H1 (cell line): ENCODE measurements at regions of chr20 and their contacts with region 1.

Region 1: GRCh38 chr20:45373353-45374100 is 4.6 kb downstream of the TP53TG5 start:
- DNase-seq: peak; percentile 70 to 96
- H3K4me3 ChIP-seq: peak overlapping the region; percentile 27 to 63 (median 45); a peak in 7 of 8 replicates
- H3K27ac ChIP-seq: no peak overlapping the region
- H3K4me1 ChIP-seq: peaks cover 0 to 16% (median 9%) of the 10 kb centered on the region in 4 experiments; a peak in 6 of 7 replicates
- H3K27me3 ChIP-seq: peaks cover 0 to 12% (median 9%) of the 10 kb centered on the region in 4 experiments; a peak in 3 of 7 replicates
- CTCF ChIP-seq: peak; percentile 88 to 96 (median 92)
- EP300 ChIP-seq: no peak
- POLR2A ChIP-seq: no peak
- RAD21 ChIP-seq: peak; percentile 77 to 85

Region 2: DNA sequence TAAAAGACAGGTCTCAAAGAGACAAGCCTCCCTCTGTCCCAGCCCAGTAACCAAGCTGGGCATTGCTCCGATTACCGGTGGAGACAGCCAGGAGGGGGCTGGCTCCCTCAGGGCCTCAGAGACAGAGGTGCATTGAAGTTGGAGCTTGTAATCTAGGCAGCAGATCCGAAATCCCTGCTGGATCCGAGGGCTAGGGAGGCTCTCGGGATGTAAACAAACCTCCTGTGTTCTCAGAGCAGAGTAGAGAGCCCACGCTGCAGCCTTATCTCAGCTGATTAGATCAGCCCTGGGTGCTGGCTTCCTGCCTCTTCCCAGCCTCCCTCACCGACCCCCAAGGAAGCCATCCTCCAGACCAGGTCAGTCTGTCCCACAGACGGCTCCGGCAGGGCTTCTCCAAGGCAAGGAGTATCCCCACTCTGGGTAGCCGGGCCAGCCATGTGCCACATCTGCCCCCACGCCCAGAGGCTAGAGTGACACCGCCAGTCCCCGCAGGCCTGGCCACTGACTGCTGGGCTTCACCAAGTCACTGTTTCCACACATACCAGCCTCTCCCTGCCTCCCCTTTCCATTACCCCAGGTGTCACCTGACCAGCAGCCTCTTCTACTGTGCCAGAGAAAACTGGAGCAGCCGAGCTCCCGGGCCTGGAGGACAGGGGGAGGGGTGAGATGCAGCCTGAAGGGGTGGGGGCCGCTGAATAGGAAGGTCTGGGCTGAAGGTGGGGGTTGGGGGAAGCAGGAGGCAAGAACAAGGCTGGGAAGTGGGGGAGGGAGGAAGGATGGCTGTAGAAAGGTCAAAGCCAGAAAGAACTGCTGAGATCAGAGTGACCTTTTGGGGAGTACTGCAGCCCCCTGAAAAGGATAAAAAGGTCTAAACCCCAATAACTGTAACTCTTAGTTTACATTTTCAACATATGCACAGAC is 31.3 kb before region 1 on chr20:
- CTCF ChIA-PET with region 1: interaction called, 24 read pairs
- POLR2A ChIA-PET with region 1: interaction called, 11 read pairs
- DNase-seq: peak in 1 of 2 experiments; percentile 63
- H3K4me3 ChIP-seq: peak overlapping the region; percentile 8 to 51 (median 36)
- H3K27ac ChIP-seq: peak overlapping the region; percentile 89
- H3K4me1 ChIP-seq: peaks cover 46 to 87% (median 62%) of the 10 kb centered on the region in 4 experiments
- H3K27me3 ChIP-seq: no peaks in the 10 kb centered on the region
- CTCF ChIP-seq: no peak
- EP300 ChIP-seq: no peak
- POLR2A ChIP-seq: peak in 1 of 2 experiments; percentile 55; a peak in 2 of 3 replicates
- RAD21 ChIP-seq: 0 out of 4 replicates have a peak, but pooled peaks of 1 of the 2 experiments have one; percentile 7

Region 3: GRCh38 chr20:45362804-45363610 is 10.5 kb before region 1 on chr20 and contains the start of gene SYS1:
- CTCF ChIA-PET with region 1: interaction called, 85 read pairs
- POLR2A ChIA-PET with region 1: interaction called, 10 read pairs
- DNase-seq: peak; percentile 97 to 99
- H3K4me3 ChIP-seq: peak within 1 kb of the TSS; percentile 54 to 98 (median 80)
- H3K27ac ChIP-seq: peak within 1 kb of the TSS; percentile 72
- H3K4me1 ChIP-seq: peaks cover 3 to 12% (median 6%) of the 10 kb centered on the region in 4 experiments; a peak in 6 of 7 replicates
- H3K27me3 ChIP-seq: no peaks in the 10 kb centered on the region
- CTCF ChIP-seq: peak; percentile 70 to 91 (median 83)
- EP300 ChIP-seq: peak in 1 of 2 experiments; percentile 52; a peak in 1 of 3 replicates
- POLR2A ChIP-seq: peak in 1 of 2 experiments; percentile 81; a peak in 2 of 3 replicates
- RAD21 ChIP-seq: peak; percentile 82 to 83
- total RNA-seq, gene SYS1: 18.2 and 19.6 TPM in 2 replicates

Region 4: GRCh38 chr20:45406259-45407066 is 32.9 kb after region 1 on chr20:
- CTCF ChIA-PET with region 1: interaction called, 127 read pairs
- POLR2A ChIA-PET with region 1: interaction called, 42 read pairs
- DNase-seq: peak in 1 of 2 experiments; percentile 78
- H3K4me3 ChIP-seq: peak overlapping the region; percentile 82 to 86 (median 84)
- H3K27ac ChIP-seq: 0 out of 2 replicates have a peak overlapping the region, but pooled peaks have one; percentile 29
- H3K4me1 ChIP-seq: peaks cover 0 to 8% (median 3%) of the 10 kb centered on the region in 4 experiments; a peak in 4 of 7 replicates
- H3K27me3 ChIP-seq: peaks cover 2 to 20% (median 10%) of the 10 kb centered on the region in 4 experiments; a peak in 6 of 7 replicates
- CTCF ChIP-seq: no peak
- EP300 ChIP-seq: no peak
- POLR2A ChIP-seq: peak; percentile 36 to 60; a peak in 2 of 3 replicates
- RAD21 ChIP-seq: no peak

Region 5: GRCh38 chr20:45450097-45450818 is 76.7 kb after region 1 on chr20:
- CTCF ChIA-PET with region 1: interaction called, 150 read pairs
- POLR2A ChIA-PET with region 1: interaction called, 3 read pairs
- DNase-seq: no peak
- H3K4me3 ChIP-seq: no peak overlapping the region
- H3K27ac ChIP-seq: no peak overlapping the region
- H3K4me1 ChIP-seq: no peaks in the 10 kb centered on the region; a peak in 1 of 7 replicates
- H3K27me3 ChIP-seq: no peaks in the 10 kb centered on the region
- CTCF ChIP-seq: peak in 2 of 3 experiments; percentile 56 to 73; a peak in 3 of 4 replicates
- EP300 ChIP-seq: no peak
- POLR2A ChIP-seq: no peak
- RAD21 ChIP-seq: peak; percentile 43 to 49